ENCODE measurements at regions of chr7 and their contacts with region 1.

Region 1: GRCh38 chr7:47056731-47057130 is 525.2 kb downstream of the TNS3 start:
- DNase-seq: no peak
- ATAC-seq: no peak

Region 2: DNA sequence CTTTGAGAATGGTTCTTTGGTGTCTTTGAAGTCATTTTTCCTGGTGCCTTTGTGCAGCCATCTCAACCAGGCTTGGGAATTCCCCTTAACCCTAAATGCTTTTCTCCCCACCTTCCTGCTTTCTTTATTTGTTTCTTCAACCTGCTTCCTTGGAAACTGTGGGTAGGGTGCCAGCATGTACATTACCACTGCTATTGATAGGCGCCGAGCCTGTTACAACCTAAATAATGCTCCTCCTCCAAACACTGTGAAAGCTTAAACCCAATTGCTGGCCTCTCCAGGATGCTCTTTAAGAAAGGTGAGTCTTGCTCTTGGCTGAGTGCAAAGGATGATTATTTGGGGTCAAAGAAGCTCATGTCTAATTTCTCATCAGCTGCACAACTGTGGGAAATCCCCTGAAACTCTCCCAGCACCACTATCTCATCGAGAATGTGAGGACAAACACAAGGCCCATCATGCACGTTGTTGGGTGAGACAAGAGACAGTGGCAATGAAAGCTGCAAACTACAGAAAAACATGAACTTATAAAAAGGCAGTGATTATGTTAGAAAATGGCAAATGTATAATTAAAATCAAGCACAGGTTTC is 850.2 kb before region 1 on chr7:
- intact Hi-C with region 1: loop called (anchors 2 kb)
- DNase-seq: no peak
- ATAC-seq: no peak

Measured in sciatic nerve (tissue), 2 donors.